ENCODE measurements at regions of chr17 and their contacts with region 1.

Region 1: DNA sequence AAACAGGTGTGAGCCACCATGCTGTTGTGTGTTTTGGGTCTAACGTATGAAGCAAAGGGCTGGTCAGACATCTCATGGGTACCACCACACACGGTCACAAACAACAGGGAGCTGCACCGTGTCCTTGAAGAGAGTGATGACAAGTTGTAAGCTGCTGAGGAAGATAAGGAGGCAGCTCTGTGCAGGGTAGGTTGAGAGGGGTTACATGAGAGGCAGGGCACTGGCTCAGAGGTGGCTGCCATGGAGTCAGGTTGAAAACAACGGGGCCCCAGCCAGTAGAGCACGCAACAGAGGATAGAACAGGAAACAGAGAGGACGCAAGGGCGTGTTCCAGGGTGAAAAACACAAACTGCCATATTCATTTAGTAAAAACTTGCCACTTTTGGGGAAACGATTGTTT is 52.2 kb downstream of the TRARG1 start:
- DNase-seq: no peak
- ATAC-seq: no peak
- H3K4me3 ChIP-seq: no peak overlapping the region
- H3K27ac ChIP-seq: no peak overlapping the region
- H3K4me1 ChIP-seq: no peaks in the 10 kb centered on the region
- H3K27me3 ChIP-seq: no peaks in the 10 kb centered on the region
- CTCF ChIP-seq: no peak
- POLR2A ChIP-seq: no peak
- RAD21 ChIP-seq: no peak

Region 2: DNA sequence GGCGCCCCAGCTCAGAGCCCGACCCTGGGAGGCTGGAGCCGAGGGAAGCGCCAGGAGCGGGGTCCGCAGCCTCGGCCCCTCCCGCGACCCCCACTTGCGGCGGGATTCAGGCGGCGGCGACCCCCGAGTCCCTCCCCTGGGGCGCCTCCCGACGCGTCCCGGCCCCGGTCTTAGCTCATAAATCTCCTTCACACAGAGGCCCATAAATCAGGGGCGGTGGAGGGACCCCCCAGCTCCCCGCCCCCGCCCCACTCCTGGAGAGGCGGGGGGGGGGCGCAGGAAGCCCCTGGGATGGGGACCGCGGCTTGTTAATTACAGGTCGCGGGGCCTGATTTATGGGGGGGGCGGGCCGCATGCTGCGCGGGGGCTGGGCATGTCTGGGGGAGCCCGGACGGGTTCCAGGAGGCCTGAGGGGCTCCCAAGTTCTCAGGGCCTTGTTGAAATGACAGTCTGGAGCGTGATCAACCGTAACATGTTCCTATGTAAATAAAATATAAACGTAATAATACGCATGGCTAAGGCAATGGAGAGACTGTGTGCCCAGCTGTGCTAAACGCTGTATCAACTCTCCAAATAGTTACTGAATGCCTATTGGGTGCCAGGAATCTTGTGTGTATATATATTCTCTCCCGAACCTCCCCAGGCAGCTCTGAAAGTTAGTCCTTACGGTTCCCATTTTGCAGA is 71.5 kb before region 1 on chr17:
- CTCF ChIA-PET with region 1: interaction called, 12 read pairs
- POLR2A ChIA-PET with region 1: no interaction called
- RAD21 ChIA-PET with region 1: interaction called in 1 of 2 experiments, 3 read pairs
- intact Hi-C with region 1: loop called (anchors 1 kb)
- DNase-seq: no peak
- ATAC-seq: no peak
- H3K4me3 ChIP-seq: peak overlapping the region; percentile 48 to 63
- H3K27ac ChIP-seq: peak overlapping the region; percentile 65
- H3K4me1 ChIP-seq: peaks cover 12 to 28% of the 10 kb centered on the region in 2 experiments
- H3K27me3 ChIP-seq: no peaks in the 10 kb centered on the region
- CTCF ChIP-seq: no peak
- POLR2A ChIP-seq: no peak
- RAD21 ChIP-seq: no peak

Region 3: DNA sequence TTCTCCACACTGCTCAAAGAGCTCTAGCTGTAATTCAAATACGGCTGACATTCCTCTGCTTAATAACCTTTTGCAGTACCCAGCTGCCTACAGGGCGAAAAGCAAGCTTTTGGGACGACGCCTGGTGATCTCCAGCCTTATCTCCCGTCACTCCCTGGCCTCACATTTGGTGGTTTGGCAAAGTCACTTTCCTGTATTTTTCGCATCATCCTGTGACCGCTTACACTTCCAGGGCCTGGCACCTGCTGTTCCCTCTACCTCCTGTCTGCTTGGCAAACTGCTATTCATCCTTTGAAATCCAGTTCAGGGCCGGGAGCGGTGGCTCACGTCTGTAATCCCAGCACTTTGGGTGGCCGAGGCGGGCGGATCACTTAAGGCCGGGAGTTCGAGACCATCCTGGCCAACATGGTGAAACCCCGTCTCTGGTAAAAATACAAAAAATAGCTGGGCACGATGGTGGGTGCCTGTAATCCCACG is 64.2 kb before region 1 on chr17:
- CTCF ChIA-PET with region 1: interaction called, 4 read pairs
- POLR2A ChIA-PET with region 1: no interaction called
- RAD21 ChIA-PET with region 1: no interaction called
- intact Hi-C with region 1: loop called (anchors 2 kb)
- DNase-seq: no peak
- ATAC-seq: peak; percentile 18
- H3K4me3 ChIP-seq: peak overlapping the region; percentile 69 to 75
- H3K27ac ChIP-seq: peak overlapping the region; percentile 86
- H3K4me1 ChIP-seq: peaks cover 38 to 50% of the 10 kb centered on the region in 2 experiments
- H3K27me3 ChIP-seq: no peaks in the 10 kb centered on the region
- CTCF ChIP-seq: no peak
- POLR2A ChIP-seq: no peak
- RAD21 ChIP-seq: no peak

Region 4: GRCh38 chr17:1275962-1276736 is 55.6 kb before region 1 on chr17:
- CTCF ChIA-PET with region 1: interaction called, 3 read pairs
- POLR2A ChIA-PET with region 1: no interaction called
- RAD21 ChIA-PET with region 1: no interaction called
- intact Hi-C with region 1: loop called (anchors 1 kb)
- DNase-seq: peak; percentile 29
- ATAC-seq: peak; percentile 92
- H3K4me3 ChIP-seq: no peak overlapping the region
- H3K27ac ChIP-seq: no peak overlapping the region
- H3K4me1 ChIP-seq: no peaks in the 10 kb centered on the region; a peak in 1 of 4 replicates
- H3K27me3 ChIP-seq: no peaks in the 10 kb centered on the region
- CTCF ChIP-seq: peak; percentile 82 to 86 (median 84)
- POLR2A ChIP-seq: no peak
- RAD21 ChIP-seq: peak; percentile 91

Region 5: GRCh38 chr17:1351971-1352370 is 20.3 kb after region 1 on chr17:
- CTCF ChIA-PET with region 1: no interaction called
- POLR2A ChIA-PET with region 1: no interaction called
- RAD21 ChIA-PET with region 1: no interaction called
- intact Hi-C with region 1: no loop called
- DNase-seq: no peak
- ATAC-seq: no peak
- H3K4me3 ChIP-seq: no peak overlapping the region
- H3K27ac ChIP-seq: no peak overlapping the region
- H3K4me1 ChIP-seq: no peaks in the 10 kb centered on the region
- H3K27me3 ChIP-seq: no peaks in the 10 kb centered on the region
- CTCF ChIP-seq: no peak
- POLR2A ChIP-seq: no peak
- RAD21 ChIP-seq: no peak